ENCODE measurements at regions of chr18 and their contacts with region 1.

Region 1: GRCh38 chr18:32018331-32019250 is at the start of gene RNF125:
- DNase-seq: peak; percentile 94
- H3K4me3 Mint-ChIP-seq: peak within 1 kb of the TSS; percentile 97
- H3K27ac Mint-ChIP-seq: peak within 1 kb of the TSS; percentile 96
- H3K4me1 Mint-ChIP-seq: peaks cover 32% of the 10 kb centered on the region
- H3K27me3 Mint-ChIP-seq: no peaks in the 10 kb centered on the region
- total RNA-seq, gene RNF125: 82.5 and 83.6 TPM in 2 replicates

Region 2: DNA sequence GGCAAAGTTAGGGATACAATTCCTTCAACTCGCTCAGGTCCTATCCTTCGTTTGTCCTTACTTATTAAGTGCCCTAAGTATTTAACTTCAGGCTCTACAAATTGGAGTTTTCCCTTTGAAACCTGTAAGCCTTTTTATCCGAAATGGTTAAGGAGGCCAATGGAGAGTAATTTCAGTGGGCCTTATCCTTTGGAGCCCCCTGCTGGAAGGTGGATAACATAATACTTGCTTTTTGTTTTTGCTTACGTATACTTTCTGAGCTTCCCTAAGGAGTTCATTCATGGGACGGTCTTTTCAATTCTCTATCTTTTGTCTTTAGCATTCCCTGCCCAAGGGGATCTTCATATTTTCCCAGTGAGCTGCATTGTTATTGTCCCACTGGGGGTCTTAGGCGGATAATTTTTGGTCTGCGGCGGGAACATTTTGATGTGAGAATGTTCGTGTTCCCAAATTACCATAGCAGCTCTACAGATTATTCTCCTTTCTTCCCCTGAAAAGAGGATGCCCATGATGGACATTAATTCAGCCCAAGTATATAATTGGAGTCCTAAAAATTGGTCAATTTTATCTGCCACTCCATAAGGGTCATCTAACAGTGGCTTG is 41.2 kb before region 1 on chr18:
- intact Hi-C with region 1: loop called (anchors 5 kb)
- DNase-seq: no peak
- H3K4me3 Mint-ChIP-seq: no peak overlapping the region
- H3K27ac Mint-ChIP-seq: no peak overlapping the region
- H3K4me1 Mint-ChIP-seq: no peaks in the 10 kb centered on the region
- H3K27me3 Mint-ChIP-seq: no peaks in the 10 kb centered on the region

Region 3: DNA sequence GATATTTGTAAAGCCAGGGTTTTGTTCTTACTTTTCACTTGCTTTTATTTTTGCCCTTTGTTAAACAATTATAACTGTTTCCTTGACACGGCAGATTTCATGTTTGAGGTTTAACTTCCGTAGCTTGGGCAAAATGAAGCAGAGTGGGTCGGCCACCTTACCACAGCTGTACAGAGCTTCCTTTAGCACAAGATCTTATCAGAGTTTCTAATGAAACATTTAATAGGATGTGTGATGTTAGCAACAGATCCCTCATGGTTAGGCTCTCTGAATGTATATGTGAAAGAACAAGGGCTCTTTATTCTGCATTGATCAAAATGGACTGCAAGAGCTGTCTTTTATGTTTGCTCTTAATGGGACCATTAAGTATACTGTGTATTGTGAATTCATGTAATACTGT is 22.3 kb after region 1 on chr18:
- intact Hi-C with region 1: loop called (anchors 1 kb)
- DNase-seq: peak; percentile 66
- H3K4me3 Mint-ChIP-seq: peak overlapping the region; percentile 64
- H3K27ac Mint-ChIP-seq: peak overlapping the region; percentile 91
- H3K4me1 Mint-ChIP-seq: peaks cover 61% of the 10 kb centered on the region
- H3K27me3 Mint-ChIP-seq: no peaks in the 10 kb centered on the region

Region 4: DNA sequence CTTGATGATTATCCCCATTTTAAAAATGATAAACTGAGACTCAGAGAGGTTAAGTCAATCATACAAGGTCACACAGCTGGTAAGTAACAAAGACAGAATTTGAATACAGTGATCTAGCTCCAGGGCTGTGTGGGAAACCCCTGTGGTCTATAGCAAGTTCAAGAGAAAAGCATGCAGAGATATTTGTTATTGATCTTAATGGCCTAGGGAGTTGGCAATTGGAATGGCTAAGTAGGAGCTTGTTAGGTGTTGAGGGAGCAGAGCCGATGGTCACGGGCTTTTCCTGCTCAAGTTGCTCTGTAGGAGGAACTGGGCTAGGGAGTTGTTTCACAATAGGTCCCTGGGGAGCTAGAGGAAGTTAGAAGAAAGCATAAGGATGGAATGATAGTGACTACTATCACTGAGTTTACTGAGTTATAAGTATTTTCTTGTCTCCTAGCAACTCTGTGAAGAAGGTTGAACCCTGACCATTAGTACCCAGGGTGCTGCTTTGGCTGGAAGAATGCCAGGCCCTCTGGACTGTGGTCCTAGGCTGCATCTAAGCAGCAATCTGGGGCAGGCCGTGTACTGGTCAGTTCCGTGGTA is 30.0 kb after region 1 on chr18:
- intact Hi-C with region 1: loop called (anchors 1 kb)
- DNase-seq: no peak
- H3K4me3 Mint-ChIP-seq: peak overlapping the region; percentile 63
- H3K27ac Mint-ChIP-seq: peak overlapping the region; percentile 97
- H3K4me1 Mint-ChIP-seq: peaks cover 41% of the 10 kb centered on the region
- H3K27me3 Mint-ChIP-seq: no peaks in the 10 kb centered on the region

Region 5: GRCh38 chr18:32072321-32072720 is 53.7 kb after region 1 on chr18:
- intact Hi-C with region 1: loop called (anchors 1 kb)
- DNase-seq: no peak
- H3K4me3 Mint-ChIP-seq: no peak overlapping the region
- H3K27ac Mint-ChIP-seq: no peak overlapping the region
- H3K4me1 Mint-ChIP-seq: peaks cover 45% of the 10 kb centered on the region
- H3K27me3 Mint-ChIP-seq: no peaks in the 10 kb centered on the region

Region 6: GRCh38 chr18:32092422-32093101 is 74.0 kb after region 1 on chr18:
- intact Hi-C with region 1: loop called (anchors 1 kb)
- DNase-seq: peak; percentile 98
- H3K4me3 Mint-ChIP-seq: peak overlapping the region; percentile 94
- H3K27ac Mint-ChIP-seq: peak overlapping the region; percentile 93
- H3K4me1 Mint-ChIP-seq: peaks cover 40% of the 10 kb centered on the region
- H3K27me3 Mint-ChIP-seq: no peaks in the 10 kb centered on the region

Measured in activated T-helper 2 cell treated with anti-CD3 and anti-CD28 coated beads, Interferon-gamma antibody, Interleukin-2, Interleukin-4, amounts not matched to agents 10 μg/mL and 5 μg/mL and 100 μg/mL, durations not matched to agents 14 hours and 24 hours and 36 hours (primary cell).